CD4-positive, alpha-beta memory T cell (primary cell): ENCODE measurements at regions of chr19 and their contacts with region 1.

Region 1: DNA sequence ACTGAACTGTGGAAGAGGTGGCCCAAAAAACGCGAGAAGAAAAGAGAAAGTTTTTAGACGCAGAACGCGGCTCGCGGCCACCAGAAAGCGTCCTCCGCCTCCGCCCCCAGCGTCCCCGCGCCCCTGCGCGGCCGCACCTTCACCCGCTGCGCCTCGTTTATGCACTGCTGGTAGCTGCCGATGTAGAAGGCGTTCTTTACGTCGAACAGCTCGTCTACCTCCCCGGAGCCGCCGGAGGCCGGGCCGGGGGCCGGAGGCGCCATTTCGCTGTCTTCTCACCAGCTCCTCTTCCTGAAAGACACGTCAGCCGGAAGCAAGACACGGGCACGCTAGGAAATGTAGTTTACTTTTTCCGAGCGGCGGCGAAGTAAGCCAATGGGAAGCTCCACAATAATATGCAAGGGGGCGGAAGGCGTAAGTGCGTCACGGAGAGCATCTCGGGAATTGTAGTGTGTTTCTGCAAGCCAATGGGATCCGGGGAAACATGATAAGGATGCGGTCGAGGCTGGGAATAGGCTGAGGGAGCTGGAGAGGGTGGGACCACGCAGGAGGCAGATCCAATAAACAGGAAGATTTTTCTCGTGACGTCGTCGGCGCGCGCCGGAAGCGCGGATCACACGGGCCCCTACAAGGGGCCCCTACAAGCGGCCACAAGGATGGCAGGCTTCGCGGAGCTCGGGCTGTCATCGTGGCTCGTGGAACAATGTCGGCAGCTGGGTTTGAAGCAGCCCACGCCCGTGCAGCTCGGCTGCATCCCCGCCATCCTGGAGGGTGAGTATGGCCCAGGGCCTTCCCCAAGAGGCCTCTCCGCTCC is at the starts of genes COPE and DDX49:
- DNase-seq: peak; percentile 97 to 100 (median 99)
- H3K4me3 ChIP-seq: peak within 1 kb of the TSS; percentile 92 to 93
- H3K4me3 Mint-ChIP-seq: peak within 1 kb of the TSS; percentile 72 to 97 (median 93)
- H3K27ac ChIP-seq: peak within 1 kb of the TSS; percentile 94
- H3K27ac Mint-ChIP-seq: peak within 1 kb of the TSS; percentile 73 to 98 (median 96)
- H3K4me1 ChIP-seq: peaks cover 45% of the 10 kb centered on the region
- H3K4me1 Mint-ChIP-seq: peaks cover 21 to 64% (median 35%) of the 10 kb centered on the region in 4 donors
- H3K27me3 ChIP-seq: no peaks in the 10 kb centered on the region
- H3K27me3 Mint-ChIP-seq: no peaks in the 10 kb centered on the region
- total RNA-seq, gene COPE: 165 to 170 TPM
- total RNA-seq, gene DDX49: 40.9 to 43.6 TPM

Region 2: DNA sequence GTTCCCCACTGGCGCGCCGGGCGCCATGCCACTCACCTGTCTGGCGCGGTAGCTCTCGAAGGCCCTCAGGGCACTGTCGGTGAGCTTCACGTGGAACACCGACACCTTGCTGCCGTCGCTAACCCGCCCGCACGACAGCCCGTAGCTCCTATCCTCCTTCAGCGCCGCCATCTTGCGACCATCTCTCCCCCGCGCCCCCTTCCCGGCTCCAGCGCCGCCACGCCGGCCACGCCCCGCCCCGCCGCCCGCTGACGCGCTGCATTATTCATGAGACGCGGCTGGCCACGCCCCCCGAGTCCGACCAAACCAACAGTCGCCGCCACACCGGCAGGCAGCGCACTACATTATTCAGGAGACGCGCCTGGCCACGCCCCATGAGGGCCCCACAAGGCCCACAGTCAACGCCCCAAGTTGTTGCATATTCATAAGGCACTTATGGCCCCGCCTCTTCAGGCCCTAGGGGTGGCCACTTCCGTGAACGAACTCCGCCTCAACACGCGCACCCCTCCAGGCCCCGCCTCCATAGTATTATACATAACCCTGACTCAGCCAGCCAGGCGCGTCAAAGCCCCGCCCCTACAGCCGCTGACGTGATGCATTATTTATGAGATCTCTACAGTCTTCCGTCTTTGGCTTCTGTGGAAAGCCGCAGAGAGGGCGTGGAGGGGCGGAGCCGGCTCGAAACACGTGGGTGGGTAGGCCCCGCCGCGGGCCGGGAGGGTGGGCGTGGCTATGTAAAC is 397.2 kb before region 1 on chr19 and contains the start of gene ELL:
- CTCF ChIA-PET with region 1: interaction called, 3 read pairs
- POLR2A ChIA-PET with region 1: interaction called, 3 read pairs
- intact Hi-C with region 1: loop called (anchors 1 kb)
- DNase-seq: peak; percentile 100
- H3K4me3 ChIP-seq: peak within 1 kb of the TSS; percentile 88 to 96
- H3K4me3 Mint-ChIP-seq: peak within 1 kb of the TSS; percentile 93 to 100 (median 98)
- H3K27ac ChIP-seq: peak within 1 kb of the TSS; percentile 96
- H3K27ac Mint-ChIP-seq: peak within 1 kb of the TSS; percentile 94 to 99 (median 98)
- H3K4me1 ChIP-seq: peaks cover 33% of the 10 kb centered on the region
- H3K4me1 Mint-ChIP-seq: peaks cover 6 to 36% (median 22%) of the 10 kb centered on the region in 4 donors
- H3K27me3 ChIP-seq: no peaks in the 10 kb centered on the region
- H3K27me3 Mint-ChIP-seq: no peaks in the 10 kb centered on the region
- total RNA-seq, gene ELL: 34.9 to 35.9 TPM

Region 3: GRCh38 chr19:18571564-18572300 is 347.6 kb before region 1 on chr19 and contains the start of gene UBA52:
- CTCF ChIA-PET with region 1: interaction called, 3 read pairs
- POLR2A ChIA-PET with region 1: interaction called, 12 read pairs
- intact Hi-C with region 1: loop called (anchors 1 kb)
- DNase-seq: peak; percentile 98 to 99 (median 99)
- H3K4me3 ChIP-seq: peak within 1 kb of the TSS; percentile 69 to 92
- H3K4me3 Mint-ChIP-seq: peak within 1 kb of the TSS; percentile 89 to 97 (median 94)
- H3K27ac ChIP-seq: peak within 1 kb of the TSS; percentile 97
- H3K27ac Mint-ChIP-seq: peak within 1 kb of the TSS; percentile 97 to 99 (median 98)
- H3K4me1 ChIP-seq: peaks cover 26% of the 10 kb centered on the region
- H3K4me1 Mint-ChIP-seq: peaks cover 12 to 36% (median 22%) of the 10 kb centered on the region in 4 donors
- H3K27me3 ChIP-seq: no peaks in the 10 kb centered on the region
- H3K27me3 Mint-ChIP-seq: no peaks in the 10 kb centered on the region
- total RNA-seq, gene UBA52: 1,962 to 1,978 TPM

Region 4: GRCh38 chr19:18789883-18790565 is 129.3 kb before region 1 on chr19:
- CTCF ChIA-PET with region 1: no interaction called
- POLR2A ChIA-PET with region 1: no interaction called
- intact Hi-C with region 1: no loop called
- DNase-seq: no peak
- H3K4me3 ChIP-seq: no peak overlapping the region
- H3K4me3 Mint-ChIP-seq: peak overlapping the region; percentile 39 to 89 (median 84)
- H3K27ac ChIP-seq: no peak overlapping the region
- H3K27ac Mint-ChIP-seq: peak overlapping the region in 1 of 7 donors; percentile 42
- H3K4me1 ChIP-seq: peaks cover 31% of the 10 kb centered on the region
- H3K4me1 Mint-ChIP-seq: peaks cover 20 to 52% (median 33%) of the 10 kb centered on the region in 4 donors
- H3K27me3 ChIP-seq: peaks cover 29% of the 10 kb centered on the region
- H3K27me3 Mint-ChIP-seq: peaks cover 44 to 61% of the 10 kb centered on the region in 2 donors

Region 5: DNA sequence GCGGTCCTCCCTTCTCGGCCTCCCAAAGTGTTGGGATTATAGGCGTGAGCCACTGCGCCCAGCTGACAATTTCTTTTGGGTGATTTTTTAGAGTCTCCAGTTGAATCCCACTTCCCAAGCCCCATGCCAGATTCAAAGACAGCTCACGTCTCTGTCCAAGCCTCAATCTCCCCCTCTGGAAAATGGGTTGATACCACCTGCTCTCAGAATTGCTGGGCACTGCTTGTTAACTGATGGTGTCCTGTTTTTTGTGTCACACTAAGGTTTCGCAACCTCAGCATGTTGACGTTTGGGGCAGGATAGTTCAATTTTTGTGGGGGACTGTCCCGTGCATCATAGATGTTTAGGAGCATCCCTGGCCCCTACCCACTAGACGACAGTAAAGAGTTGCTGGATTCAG is 101.7 kb before region 1 on chr19:
- CTCF ChIA-PET with region 1: no interaction called
- POLR2A ChIA-PET with region 1: no interaction called
- intact Hi-C with region 1: no loop called
- DNase-seq: no peak
- H3K4me3 ChIP-seq: no peak overlapping the region
- H3K4me3 Mint-ChIP-seq: no peak overlapping the region
- H3K27ac ChIP-seq: no peak overlapping the region
- H3K27ac Mint-ChIP-seq: no peak overlapping the region
- H3K4me1 ChIP-seq: no peaks in the 10 kb centered on the region
- H3K4me1 Mint-ChIP-seq: no peaks in the 10 kb centered on the region
- H3K27me3 ChIP-seq: no peaks in the 10 kb centered on the region
- H3K27me3 Mint-ChIP-seq: no peaks in the 10 kb centered on the region

Region 6: DNA sequence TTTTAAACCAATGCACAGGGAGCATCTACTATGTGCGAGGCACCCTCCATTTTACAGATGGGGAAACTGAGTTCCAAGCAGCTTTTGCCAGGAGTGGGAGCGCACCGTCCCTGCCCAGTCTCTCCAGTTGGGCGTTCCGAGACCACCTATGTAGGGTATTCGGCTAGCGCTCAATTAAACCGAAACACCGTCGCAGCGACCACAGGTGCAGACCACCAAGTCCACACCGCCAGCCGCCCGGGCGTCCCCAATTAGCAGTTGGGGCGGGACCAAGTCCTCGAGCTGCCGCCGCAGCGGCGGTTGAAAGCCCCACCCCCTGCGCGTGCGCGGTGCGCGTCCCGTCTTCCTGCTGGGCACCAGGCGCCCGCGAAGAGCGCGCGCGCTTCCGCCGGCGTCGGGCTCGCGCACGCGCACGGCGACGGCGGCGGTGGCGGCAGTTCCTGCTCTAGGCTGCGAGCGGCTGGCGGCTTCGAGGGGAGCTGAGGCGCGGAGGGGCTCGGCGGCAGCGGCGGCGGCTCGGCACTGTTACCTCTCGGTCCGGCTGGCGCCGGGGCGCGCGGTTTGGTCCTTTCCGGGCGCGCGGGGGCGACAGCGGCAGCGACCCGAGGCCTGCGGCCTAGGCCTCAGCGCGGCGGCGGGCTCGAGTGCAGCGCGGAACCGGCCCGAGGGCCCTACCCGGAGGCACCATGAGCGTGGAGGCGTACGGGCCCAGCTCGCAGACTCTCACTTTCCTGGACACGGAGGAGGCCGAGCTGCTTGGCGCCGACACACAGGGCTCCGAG is 87.6 kb before region 1 on chr19 and contains the start of gene UPF1:
- CTCF ChIA-PET with region 1: no interaction called
- POLR2A ChIA-PET with region 1: interaction called, 10 read pairs
- intact Hi-C with region 1: no loop called
- DNase-seq: peak; percentile 94 to 97 (median 95)
- H3K4me3 ChIP-seq: peak within 1 kb of the TSS; percentile 64 to 85
- H3K4me3 Mint-ChIP-seq: peak within 1 kb of the TSS; percentile 90 to 99 (median 95)
- H3K27ac ChIP-seq: peak within 1 kb of the TSS; percentile 75
- H3K27ac Mint-ChIP-seq: peak within 1 kb of the TSS; percentile 89 to 96 (median 93)
- H3K4me1 ChIP-seq: peaks cover 36% of the 10 kb centered on the region
- H3K4me1 Mint-ChIP-seq: peaks cover 29 to 47% (median 36%) of the 10 kb centered on the region in 4 donors
- H3K27me3 ChIP-seq: no peaks in the 10 kb centered on the region
- H3K27me3 Mint-ChIP-seq: peaks cover 2 to 5% of the 10 kb centered on the region in 2 donors
- total RNA-seq, gene UPF1: 127 to 130 TPM

Region 7: GRCh38 chr19:18932216-18932841 is 13.0 kb after region 1 on chr19:
- CTCF ChIA-PET with region 1: no interaction called
- POLR2A ChIA-PET with region 1: interaction called, 17 read pairs
- intact Hi-C with region 1: loop called (anchors 1 kb)
- DNase-seq: peak; percentile 70 to 87 (median 73)
- H3K4me3 ChIP-seq: peak overlapping the region in 1 of 2 donors; percentile 34
- H3K4me3 Mint-ChIP-seq: peak overlapping the region; percentile 65 to 91 (median 80)
- H3K27ac ChIP-seq: no peak overlapping the region
- H3K27ac Mint-ChIP-seq: peak overlapping the region in 5 of 7 donors; percentile 16 to 74 (median 53)
- H3K4me1 ChIP-seq: peaks cover 8% of the 10 kb centered on the region
- H3K4me1 Mint-ChIP-seq: peaks cover 3 to 12% (median 7%) of the 10 kb centered on the region in 4 donors
- H3K27me3 ChIP-seq: no peaks in the 10 kb centered on the region
- H3K27me3 Mint-ChIP-seq: peaks cover 3 to 10% of the 10 kb centered on the region in 2 donors

Region 8: GRCh38 chr19:19138169-19138981 is 219.1 kb after region 1 on chr19 and contains the start of gene TMEM161A:
- CTCF ChIA-PET with region 1: interaction called, 3 read pairs
- POLR2A ChIA-PET with region 1: no interaction called
- intact Hi-C with region 1: loop called (anchors 2 kb)
- DNase-seq: peak; percentile 93 to 97 (median 94)
- H3K4me3 ChIP-seq: peak within 1 kb of the TSS; percentile 80 to 85
- H3K4me3 Mint-ChIP-seq: peak within 1 kb of the TSS; percentile 91 to 99 (median 98)
- H3K27ac ChIP-seq: peak within 1 kb of the TSS; percentile 71
- H3K27ac Mint-ChIP-seq: peak within 1 kb of the TSS; percentile 76 to 99 (median 96)
- H3K4me1 ChIP-seq: peaks cover 28% of the 10 kb centered on the region
- H3K4me1 Mint-ChIP-seq: peaks cover 10 to 32% (median 21%) of the 10 kb centered on the region in 4 donors
- H3K27me3 ChIP-seq: no peaks in the 10 kb centered on the region
- H3K27me3 Mint-ChIP-seq: no peaks in the 10 kb centered on the region
- total RNA-seq, gene TMEM161A: 22.5 to 25.1 TPM